Activated naive CD8-positive, alpha-beta T cell treated with anti-CD3 and anti-CD28 coated beads, Interleukin-2, amount 10 ng/mL, durations not matched to agents 7 days and 5 days (primary cell): ENCODE measurements at regions of chr12 and their contacts with region 1.

Region 1: GRCh38 chr12:54993161-54993835 is 8.7 kb upstream of the TESPA1 start:
- DNase-seq: no peak
- ATAC-seq: peak; percentile 71
- H3K4me3 Mint-ChIP-seq: no peak overlapping the region
- H3K27ac Mint-ChIP-seq: no peak overlapping the region
- H3K4me1 Mint-ChIP-seq: peaks cover 33% of the 10 kb centered on the region
- H3K27me3 Mint-ChIP-seq: no peaks in the 10 kb centered on the region

Region 2: GRCh38 chr12:55073043-55074022 is 80.0 kb after region 1 on chr12:
- POLR2A ChIA-PET with region 1: interaction called, 14 read pairs
- DNase-seq: peak; percentile 70
- ATAC-seq: peak; percentile 43
- H3K4me3 Mint-ChIP-seq: no peak overlapping the region
- H3K27ac Mint-ChIP-seq: no peak overlapping the region
- H3K4me1 Mint-ChIP-seq: peaks cover 4% of the 10 kb centered on the region
- H3K27me3 Mint-ChIP-seq: peaks cover 23% of the 10 kb centered on the region